Activated B cell treated with CpG ODN at 0.5 μM for 24 hours (primary cell): ENCODE measurements at regions of chr16 and their contacts with region 1.

Region 1: DNA sequence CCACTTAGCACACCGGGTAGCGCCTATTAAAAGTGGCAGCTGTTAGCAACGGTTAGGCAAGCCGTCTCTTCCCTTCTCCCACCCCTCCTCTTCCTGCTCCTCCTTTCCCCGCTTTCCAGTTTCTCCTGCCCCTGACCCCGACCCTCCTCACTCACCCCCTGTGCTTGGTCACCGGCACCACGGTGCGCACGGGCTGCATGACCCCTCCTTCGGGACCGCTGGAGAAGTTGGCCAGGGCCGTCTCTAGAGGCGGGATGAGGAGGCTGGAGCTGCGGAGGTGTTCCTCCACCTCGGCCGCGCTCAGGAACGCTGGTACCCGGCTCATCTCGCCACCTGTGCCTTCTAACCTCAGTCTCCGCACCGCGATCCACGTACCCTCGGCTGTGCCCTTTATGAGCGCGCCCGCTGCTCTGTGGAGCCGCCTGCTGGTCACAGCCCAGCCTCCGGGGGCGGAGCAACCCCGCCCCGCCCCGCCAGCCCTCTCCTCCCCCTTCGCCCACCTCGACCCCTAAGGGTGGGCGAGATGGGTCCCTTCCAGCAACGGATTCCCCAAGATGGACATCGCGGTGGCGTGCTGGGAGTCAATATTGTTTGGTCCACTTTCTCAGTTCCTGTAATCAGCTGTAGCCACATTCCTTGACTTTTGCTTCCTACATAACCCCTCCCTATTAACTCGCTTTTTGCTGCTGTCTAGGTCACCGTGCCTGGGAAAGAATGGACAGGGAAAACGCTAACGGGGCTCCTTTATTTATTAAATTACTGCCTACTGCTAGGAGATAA is at the start of gene CRYM:
- DNase-seq: peak; percentile 76
- ATAC-seq: peak; percentile 95
- H3K4me3 Mint-ChIP-seq: peak within 1 kb of the TSS; percentile 79
- H3K27ac Mint-ChIP-seq: no peak within 1 kb of the TSS
- H3K4me1 Mint-ChIP-seq: peaks cover 46% of the 10 kb centered on the region
- H3K27me3 Mint-ChIP-seq: peaks cover 16% of the 10 kb centered on the region
- CTCF ChIP-seq: peak; percentile 42
- total RNA-seq, gene CRYM: 4.2 and 4.5 TPM in 2 replicates

Region 2: DNA sequence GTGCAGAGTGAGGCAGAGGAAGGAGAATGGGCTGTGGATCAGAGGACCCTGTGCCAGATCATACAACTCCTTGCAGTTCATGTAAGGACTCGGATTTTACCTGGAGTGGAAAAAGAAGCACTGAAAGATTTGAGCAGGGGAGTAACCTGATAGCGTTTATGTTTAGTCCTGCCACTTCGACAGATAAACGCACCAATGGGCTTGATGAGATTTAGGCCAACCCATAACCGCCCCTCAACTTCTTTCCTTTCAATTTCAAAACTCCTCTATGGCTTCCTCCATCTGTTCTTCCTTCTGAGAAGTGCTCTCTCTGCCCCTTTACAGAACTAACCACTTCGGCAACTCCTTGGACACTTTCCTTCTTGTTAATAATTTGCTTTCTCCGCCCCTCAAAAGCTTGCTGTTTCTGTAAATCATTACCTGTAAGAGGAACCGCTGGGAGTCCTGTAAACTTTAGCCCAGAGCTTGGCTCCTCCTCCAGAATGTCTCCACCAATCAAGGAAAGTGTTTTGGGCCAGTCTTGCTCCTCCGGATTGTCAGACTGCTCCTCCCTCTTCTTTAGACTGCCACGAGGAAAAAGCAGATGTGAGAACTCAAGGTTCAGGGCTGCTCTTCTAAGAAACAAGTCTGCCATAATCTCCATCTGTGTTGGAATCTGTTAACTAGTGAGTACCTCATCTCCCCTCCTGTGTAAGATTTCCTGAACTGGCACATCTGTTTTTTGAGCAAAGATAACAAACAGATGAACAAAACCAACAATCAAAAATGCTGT is 514.5 kb before region 1 on chr16 and contains the start of gene ACSM3:
- CTCF ChIA-PET with region 1: no interaction called
- POLR2A ChIA-PET with region 1: no interaction called
- intact Hi-C with region 1: loop called (anchors 5 kb)
- DNase-seq: peak; percentile 26
- ATAC-seq: peak; percentile 100
- H3K4me3 Mint-ChIP-seq: peak within 1 kb of the TSS; percentile 90
- H3K27ac Mint-ChIP-seq: peak within 1 kb of the TSS; percentile 93
- H3K4me1 Mint-ChIP-seq: peaks cover 15% of the 10 kb centered on the region
- H3K27me3 Mint-ChIP-seq: no peaks in the 10 kb centered on the region
- CTCF ChIP-seq: no peak
- total RNA-seq, gene ACSM3: 12.8 and 13.6 TPM in 2 replicates

Region 3: DNA sequence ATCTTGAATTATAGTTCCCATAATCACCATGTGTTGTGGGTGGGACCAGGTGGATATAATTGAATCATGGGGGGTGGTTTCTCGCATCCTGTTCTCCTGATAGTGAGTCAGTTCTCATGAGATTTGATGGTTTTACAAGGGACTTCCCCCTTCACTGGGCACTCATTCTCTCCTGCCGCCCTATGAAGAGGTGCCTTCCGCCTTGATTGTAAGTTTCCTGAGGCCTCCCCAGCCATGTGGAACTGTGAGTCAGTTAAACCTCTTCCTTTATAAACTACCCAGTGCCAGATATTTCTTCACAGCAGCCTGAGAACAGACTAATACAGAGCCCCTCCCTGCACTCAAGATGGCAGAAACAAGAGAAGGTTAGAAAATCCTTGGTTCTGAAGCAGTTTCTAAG is 93.3 kb before region 1 on chr16:
- CTCF ChIA-PET with region 1: interaction called, 13 read pairs
- POLR2A ChIA-PET with region 1: interaction called, 4 read pairs
- intact Hi-C with region 1: loop called (anchors 1 kb)
- DNase-seq: no peak
- ATAC-seq: peak; percentile 65
- H3K4me3 Mint-ChIP-seq: no peak overlapping the region
- H3K27ac Mint-ChIP-seq: peak overlapping the region; percentile 85
- H3K4me1 Mint-ChIP-seq: peaks cover 21% of the 10 kb centered on the region
- H3K27me3 Mint-ChIP-seq: peaks cover 2% of the 10 kb centered on the region
- CTCF ChIP-seq: no peak

Region 4: DNA sequence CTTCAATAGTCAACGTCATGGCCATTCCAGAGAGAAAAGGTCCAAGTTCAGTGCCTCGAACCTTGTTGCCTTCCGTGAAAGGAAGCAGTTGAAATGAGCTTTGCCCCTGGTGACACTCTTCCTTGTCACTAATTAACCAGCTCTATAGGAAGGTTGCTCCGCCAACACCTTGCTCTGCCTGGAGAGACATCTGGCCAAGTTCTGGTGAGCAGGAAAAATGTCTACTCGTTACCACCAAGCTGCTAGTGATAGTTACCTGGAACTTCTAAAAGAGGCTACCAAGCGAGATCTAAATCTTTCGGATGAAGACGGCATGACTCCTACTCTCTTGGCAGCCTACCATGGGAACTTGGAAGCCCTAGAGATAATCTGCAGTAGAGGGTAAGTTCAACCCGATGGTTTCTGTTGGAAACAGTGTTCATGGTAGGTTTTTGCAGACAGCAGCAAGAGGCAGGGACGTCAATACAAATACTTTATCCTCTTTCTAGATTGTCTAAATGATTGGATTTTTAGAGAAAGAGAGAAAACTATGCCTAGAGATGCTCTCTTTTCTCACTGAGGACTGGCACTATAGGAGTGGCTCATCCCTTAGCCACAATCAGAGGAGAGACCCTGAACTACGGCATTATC is 44.5 kb before region 1 on chr16 and contains the start of gene ANKS4B:
- CTCF ChIA-PET with region 1: no interaction called
- POLR2A ChIA-PET with region 1: no interaction called
- intact Hi-C with region 1: no loop called
- DNase-seq: no peak
- ATAC-seq: no peak
- H3K4me3 Mint-ChIP-seq: no peak within 1 kb of the TSS
- H3K27ac Mint-ChIP-seq: no peak within 1 kb of the TSS
- H3K4me1 Mint-ChIP-seq: no peaks in the 10 kb centered on the region
- H3K27me3 Mint-ChIP-seq: peaks cover 27% of the 10 kb centered on the region
- CTCF ChIP-seq: no peak
- total RNA-seq, gene ANKS4B: not detected in 2 replicates

Region 5: GRCh38 chr16:21263640-21264570 is 14.2 kb before region 1 on chr16:
- CTCF ChIA-PET with region 1: interaction called, 8 read pairs
- POLR2A ChIA-PET with region 1: interaction called, 4 read pairs
- intact Hi-C with region 1: loop called (anchors 1 kb)
- DNase-seq: no peak
- ATAC-seq: peak; percentile 82
- H3K4me3 Mint-ChIP-seq: peak overlapping the region; percentile 47
- H3K27ac Mint-ChIP-seq: peak overlapping the region; percentile 72
- H3K4me1 Mint-ChIP-seq: peaks cover 41% of the 10 kb centered on the region
- H3K27me3 Mint-ChIP-seq: peaks cover 9% of the 10 kb centered on the region
- CTCF ChIP-seq: no peak

Region 6: GRCh38 chr16:21300309-21301167 is 22.4 kb after region 1 on chr16:
- CTCF ChIA-PET with region 1: interaction called, 6 read pairs
- POLR2A ChIA-PET with region 1: interaction called, 10 read pairs
- intact Hi-C with region 1: loop called (anchors 2 kb)
- DNase-seq: peak; percentile 43
- ATAC-seq: peak; percentile 43
- H3K4me3 Mint-ChIP-seq: peak overlapping the region; percentile 97
- H3K27ac Mint-ChIP-seq: peak overlapping the region; percentile 88
- H3K4me1 Mint-ChIP-seq: peaks cover 30% of the 10 kb centered on the region
- H3K27me3 Mint-ChIP-seq: peaks cover 3% of the 10 kb centered on the region
- CTCF ChIP-seq: no peak